ENCODE measurements at regions of chr2 and their contacts with region 1.

Region 1: GRCh38 chr2:74715078-74715791 is 61.2 kb downstream of the SEMA4F start:
- DNase-seq: peak; percentile 48
- ATAC-seq: peak; percentile 97
- H3K4me3 ChIP-seq: peak overlapping the region; percentile 71
- H3K27ac ChIP-seq: no peak overlapping the region
- H3K4me1 ChIP-seq: no peaks in the 10 kb centered on the region
- H3K27me3 ChIP-seq: peaks cover 4 to 6% of the 10 kb centered on the region in 2 experiments; a peak in 2 of 4 replicates
- CTCF ChIP-seq: peak; percentile 87 to 94 (median 90)
- EP300 ChIP-seq: no peak
- POLR2A ChIP-seq: no peak
- RAD21 ChIP-seq: peak; percentile 86

Region 2: DNA sequence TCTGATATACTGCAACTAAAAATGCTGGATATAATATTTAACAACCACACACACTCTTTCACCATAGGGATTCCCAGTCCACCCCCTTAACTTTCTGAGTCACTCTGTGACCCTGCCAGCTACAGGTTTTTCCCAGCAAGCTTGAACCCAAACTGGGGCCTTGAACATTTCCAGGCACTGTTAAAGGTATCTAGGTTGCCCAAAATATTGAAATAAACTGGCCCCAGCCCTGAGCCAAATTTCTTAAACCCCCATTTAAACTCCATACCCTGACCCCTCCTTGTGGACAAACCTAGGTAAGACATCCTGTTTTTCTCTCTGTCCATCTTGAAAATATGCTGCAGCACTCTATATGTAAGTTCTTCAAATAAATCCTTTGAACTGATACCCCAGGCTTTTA is 315.4 kb before region 1 on chr2:
- CTCF ChIA-PET with region 1: no interaction called
- POLR2A ChIA-PET with region 1: no interaction called
- RAD21 ChIA-PET with region 1: no interaction called
- SMC1A ChIA-PET with region 1: no interaction called
- in situ Hi-C with region 1: no loop called
- intact Hi-C with region 1: no loop called
- DNase-seq: no peak
- ATAC-seq: peak; percentile 92
- H3K4me3 ChIP-seq: no peak overlapping the region
- H3K27ac ChIP-seq: no peak overlapping the region
- H3K4me1 ChIP-seq: no peaks in the 10 kb centered on the region
- H3K27me3 ChIP-seq: no peaks in the 10 kb centered on the region
- CTCF ChIP-seq: peak; percentile 49 to 67 (median 60)
- EP300 ChIP-seq: no peak
- POLR2A ChIP-seq: no peak
- RAD21 ChIP-seq: peak; percentile 74

Region 3: GRCh38 chr2:74690571-74690970 is 24.7 kb before region 1 on chr2:
- CTCF ChIA-PET with region 1: interaction called, 15 read pairs
- POLR2A ChIA-PET with region 1: no interaction called
- RAD21 ChIA-PET with region 1: interaction called, 6 read pairs
- SMC1A ChIA-PET with region 1: interaction called, 9 read pairs
- in situ Hi-C with region 1: no loop called
- intact Hi-C with region 1: no loop called
- DNase-seq: peak; percentile 28
- ATAC-seq: peak; percentile 95
- H3K4me3 ChIP-seq: no peak overlapping the region
- H3K27ac ChIP-seq: no peak overlapping the region
- H3K4me1 ChIP-seq: no peaks in the 10 kb centered on the region
- H3K27me3 ChIP-seq: peaks cover 0 to 2% of the 10 kb centered on the region in 2 experiments; a peak in 1 of 4 replicates
- CTCF ChIP-seq: peak; percentile 71 to 92 (median 72)
- EP300 ChIP-seq: no peak
- POLR2A ChIP-seq: no peak
- RAD21 ChIP-seq: peak; percentile 94

Region 4: DNA sequence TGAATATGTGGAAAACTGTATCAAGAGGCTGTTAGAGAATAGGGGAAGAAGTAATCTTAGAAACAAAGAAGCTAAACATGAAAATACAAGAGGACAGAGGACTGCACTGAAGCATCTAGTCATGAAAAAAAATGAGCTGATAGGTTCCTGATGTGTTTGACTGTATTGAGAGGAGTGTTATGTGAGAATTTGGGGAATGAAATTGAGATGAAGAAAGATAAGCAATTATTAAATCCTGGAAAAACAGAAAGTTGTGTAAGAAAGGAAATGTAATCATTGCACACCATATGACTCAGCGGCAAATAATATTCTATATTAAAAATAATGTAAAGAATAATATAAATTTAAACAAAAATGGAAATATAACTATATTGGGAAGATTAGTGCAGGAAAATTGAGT is 10.1 kb after region 1 on chr2:
- CTCF ChIA-PET with region 1: interaction called, 11 read pairs
- POLR2A ChIA-PET with region 1: no interaction called
- RAD21 ChIA-PET with region 1: no interaction called
- SMC1A ChIA-PET with region 1: no interaction called
- in situ Hi-C with region 1: no loop called
- intact Hi-C with region 1: no loop called
- DNase-seq: no peak
- ATAC-seq: no peak
- H3K4me3 ChIP-seq: no peak overlapping the region
- H3K27ac ChIP-seq: no peak overlapping the region
- H3K4me1 ChIP-seq: no peaks in the 10 kb centered on the region
- H3K27me3 ChIP-seq: no peaks in the 10 kb centered on the region
- CTCF ChIP-seq: no peak
- EP300 ChIP-seq: no peak
- POLR2A ChIP-seq: no peak
- RAD21 ChIP-seq: no peak

Region 5: GRCh38 chr2:74833418-74834233 is 118.4 kb after region 1 on chr2 and contains the start of gene HK2:
- CTCF ChIA-PET with region 1: interaction called, 10 read pairs
- POLR2A ChIA-PET with region 1: interaction called, 3 read pairs
- RAD21 ChIA-PET with region 1: interaction called, 3 read pairs
- SMC1A ChIA-PET with region 1: interaction called, 5 read pairs
- in situ Hi-C with region 1: no loop called
- intact Hi-C with region 1: loop called (anchors 2 kb)
- DNase-seq: peak; percentile 70
- ATAC-seq: peak; percentile 88
- H3K4me3 ChIP-seq: peak within 1 kb of the TSS; percentile 76
- H3K27ac ChIP-seq: peak within 1 kb of the TSS; percentile 73
- H3K4me1 ChIP-seq: peaks cover 11% of the 10 kb centered on the region
- H3K27me3 ChIP-seq: no peaks in the 10 kb centered on the region
- CTCF ChIP-seq: no peak
- EP300 ChIP-seq: no peak
- POLR2A ChIP-seq: peak; percentile 73
- RAD21 ChIP-seq: no peak
- polyA plus RNA-seq, gene HK2: 5.0 to 6.4 TPM

Region 6: DNA sequence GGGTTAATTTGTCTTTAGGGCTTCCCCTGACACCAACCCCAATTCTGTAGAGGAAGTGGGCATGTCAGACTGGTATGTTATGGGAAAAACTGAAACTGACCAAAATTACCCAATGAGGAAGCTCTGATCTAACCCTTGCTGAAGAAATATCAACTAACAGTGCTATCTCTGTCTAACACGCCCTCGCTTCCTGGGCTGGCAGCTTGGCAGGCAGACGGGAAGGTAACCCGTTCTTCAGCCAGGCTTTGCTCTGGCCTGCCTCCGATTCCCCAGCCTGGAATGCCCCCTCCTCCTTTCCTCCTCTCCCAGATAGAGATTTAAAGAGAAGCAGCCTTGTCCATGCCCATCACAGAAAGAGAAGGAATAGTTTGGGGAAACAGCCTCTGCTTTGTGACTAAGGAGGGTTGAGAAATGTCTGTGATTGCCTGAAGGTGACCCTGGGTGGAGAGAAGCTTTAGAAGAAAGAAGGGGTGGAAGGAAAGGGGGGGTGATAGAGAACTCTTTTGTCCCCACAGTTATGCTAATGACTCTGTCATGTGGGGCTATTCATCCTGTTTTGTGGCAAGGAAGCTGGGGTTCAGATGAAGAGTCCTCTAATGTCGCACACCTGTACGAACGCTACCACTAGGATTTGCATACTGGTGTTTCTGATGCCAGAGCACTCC is 134.1 kb after region 1 on chr2:
- CTCF ChIA-PET with region 1: interaction called, 3 read pairs
- POLR2A ChIA-PET with region 1: no interaction called
- RAD21 ChIA-PET with region 1: interaction called, 4 read pairs
- SMC1A ChIA-PET with region 1: interaction called, 10 read pairs
- in situ Hi-C with region 1: no loop called
- intact Hi-C with region 1: no loop called
- DNase-seq: peak; percentile 62
- ATAC-seq: peak; percentile 88
- H3K4me3 ChIP-seq: peak overlapping the region; percentile 59; the same call in 1 of the 2 replicates
- H3K27ac ChIP-seq: peak overlapping the region; percentile 80
- H3K4me1 ChIP-seq: peaks cover 55% of the 10 kb centered on the region
- H3K27me3 ChIP-seq: no peaks in the 10 kb centered on the region
- CTCF ChIP-seq: no peak
- EP300 ChIP-seq: no peak
- POLR2A ChIP-seq: peak; percentile 51; the same call in 1 of the 2 replicates
- RAD21 ChIP-seq: no peak

Measured in GM12878 (cell line).